Colonic mucosa (tissue), 4 donors: ENCODE measurements at regions of chr6 and their contacts with region 1.

Region 1: GRCh38 chr6:42075159-42075838 is 25.0 kb downstream of the TAF8 start:
- DNase-seq: peak; percentile 88
- H3K4me3 ChIP-seq: no peak overlapping the region
- H3K27ac ChIP-seq: no peak overlapping the region
- H3K4me1 ChIP-seq: no peaks in the 10 kb centered on the region
- H3K27me3 ChIP-seq: no peaks in the 10 kb centered on the region
- CTCF ChIP-seq: peak; percentile 67

Region 2: GRCh38 chr6:42017021-42017643 is 58.2 kb before region 1 on chr6:
- intact Hi-C with region 1: no loop called
- DNase-seq: no peak
- H3K4me3 ChIP-seq: no peak overlapping the region
- H3K27ac ChIP-seq: no peak overlapping the region
- H3K4me1 ChIP-seq: no peaks in the 10 kb centered on the region
- H3K27me3 ChIP-seq: no peaks in the 10 kb centered on the region
- CTCF ChIP-seq: no peak

Region 3: DNA sequence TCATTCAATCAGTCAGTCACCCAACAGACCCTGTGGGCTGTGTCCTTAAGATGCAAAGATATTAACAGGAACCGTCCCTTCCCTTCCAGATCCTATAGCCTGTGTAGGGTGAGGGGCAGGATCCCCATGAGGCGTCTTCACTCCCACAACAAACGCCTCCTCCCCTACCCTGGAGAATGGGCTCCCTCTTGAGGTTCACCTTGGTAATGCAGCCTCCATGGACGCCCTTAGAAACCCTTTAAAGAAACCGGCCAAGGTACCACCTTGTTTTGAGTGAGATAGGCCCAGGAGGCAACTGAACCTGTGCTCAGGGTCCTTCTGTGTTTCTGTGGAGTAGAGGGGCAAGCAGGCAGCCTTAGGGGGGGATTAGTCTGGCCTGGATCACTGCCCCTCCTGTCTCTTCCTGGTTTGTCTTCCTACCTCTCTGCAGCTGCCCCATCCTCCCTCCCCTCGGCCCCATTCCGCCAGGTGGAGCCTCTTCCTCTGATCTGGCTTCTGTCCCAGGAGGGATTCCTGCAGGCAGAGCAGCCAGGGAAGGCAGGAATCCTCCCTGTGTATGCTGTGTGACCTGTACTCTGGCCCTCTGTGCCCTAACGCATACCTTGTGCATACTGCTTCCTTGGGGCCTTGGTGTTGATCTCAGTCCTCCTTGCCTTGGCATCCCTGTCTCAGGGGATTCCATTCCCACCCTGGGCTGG is 91.3 kb after region 1 on chr6:
- intact Hi-C with region 1: loop called (anchors 1 kb)
- DNase-seq: peak; percentile 90
- H3K4me3 ChIP-seq: no peak overlapping the region
- H3K27ac ChIP-seq: no peak overlapping the region
- H3K4me1 ChIP-seq: no peaks in the 10 kb centered on the region
- H3K27me3 ChIP-seq: no peaks in the 10 kb centered on the region
- CTCF ChIP-seq: peak; percentile 96

Region 4: GRCh38 chr6:42217519-42218367 is 142.4 kb after region 1 on chr6 and contains the start of gene MRPS10:
- intact Hi-C with region 1: loop called (anchors 2 kb)
- DNase-seq: peak; percentile 94
- H3K4me3 ChIP-seq: peak within 1 kb of the TSS; percentile 59
- H3K27ac ChIP-seq: peak within 1 kb of the TSS; percentile 34
- H3K4me1 ChIP-seq: no peaks in the 10 kb centered on the region
- H3K27me3 ChIP-seq: no peaks in the 10 kb centered on the region
- CTCF ChIP-seq: no peak
- total RNA-seq, gene MRPS10: 32.5 to 33.0 TPM